CD8-positive, alpha-beta T cell (primary cell): ENCODE measurements at regions of chr2 and their contacts with region 1.

Region 1: GRCh38 chr2:162221064-162221463 is 22.2 kb downstream of the FAP start:
- DNase-seq: peak in 8 of 9 experiments; percentile 30 to 72 (median 56)
- ATAC-seq: peak; percentile 62
- H3K4me3 ChIP-seq: no peak overlapping the region
- H3K4me3 Mint-ChIP-seq: no peak overlapping the region
- H3K27ac ChIP-seq: no peak overlapping the region
- H3K27ac Mint-ChIP-seq: no peak overlapping the region
- H3K4me1 ChIP-seq: no peaks in the 10 kb centered on the region
- H3K4me1 Mint-ChIP-seq: no peaks in the 10 kb centered on the region
- H3K27me3 ChIP-seq: peaks cover 0 to 6% of the 10 kb centered on the region in 2 experiments
- H3K27me3 Mint-ChIP-seq: peaks cover 18% of the 10 kb centered on the region
- CTCF ChIP-seq: peak; percentile 81

Region 2: DNA sequence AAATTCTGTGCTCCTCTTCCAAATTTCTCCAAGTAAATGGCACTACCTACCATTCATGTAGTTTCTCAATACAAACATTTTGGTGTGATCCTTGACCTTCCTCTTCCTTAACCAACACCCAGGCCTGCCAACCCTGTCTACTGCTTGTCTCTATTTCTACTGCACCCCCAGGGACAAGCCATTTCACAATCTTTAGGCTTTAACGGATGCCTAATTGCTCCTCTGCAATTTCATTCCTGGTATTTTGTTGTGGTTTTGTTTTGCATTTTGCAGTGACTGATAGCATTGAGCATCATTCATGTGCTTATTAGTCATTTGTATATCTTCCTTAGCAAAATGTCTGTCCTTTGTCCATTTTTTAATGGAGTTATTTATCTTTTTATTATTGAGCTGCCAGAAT is 12.1 kb after region 1 on chr2:
- CTCF ChIA-PET with region 1: interaction called, 15 read pairs
- POLR2A ChIA-PET with region 1: no interaction called
- intact Hi-C with region 1: no loop called
- DNase-seq: no peak
- ATAC-seq: no peak
- H3K4me3 ChIP-seq: no peak overlapping the region
- H3K4me3 Mint-ChIP-seq: no peak overlapping the region
- H3K27ac ChIP-seq: no peak overlapping the region
- H3K27ac Mint-ChIP-seq: no peak overlapping the region
- H3K4me1 ChIP-seq: no peaks in the 10 kb centered on the region
- H3K4me1 Mint-ChIP-seq: no peaks in the 10 kb centered on the region
- H3K27me3 ChIP-seq: no peaks in the 10 kb centered on the region
- H3K27me3 Mint-ChIP-seq: peaks cover 11% of the 10 kb centered on the region
- CTCF ChIP-seq: no peak

Region 3: GRCh38 chr2:163312713-163313112 is 1091.6 kb after region 1 on chr2:
- CTCF ChIA-PET with region 1: no interaction called
- POLR2A ChIA-PET with region 1: no interaction called
- intact Hi-C with region 1: no loop called
- DNase-seq: no peak
- ATAC-seq: no peak
- H3K4me3 ChIP-seq: no peak overlapping the region
- H3K4me3 Mint-ChIP-seq: no peak overlapping the region
- H3K27ac ChIP-seq: no peak overlapping the region
- H3K27ac Mint-ChIP-seq: no peak overlapping the region
- H3K4me1 ChIP-seq: no peaks in the 10 kb centered on the region
- H3K4me1 Mint-ChIP-seq: no peaks in the 10 kb centered on the region
- H3K27me3 ChIP-seq: no peaks in the 10 kb centered on the region
- H3K27me3 Mint-ChIP-seq: no peaks in the 10 kb centered on the region
- CTCF ChIP-seq: no peak